Panc1 (cell line): ENCODE measurements at regions of chr1 and their contacts with region 1.

Region 1: DNA sequence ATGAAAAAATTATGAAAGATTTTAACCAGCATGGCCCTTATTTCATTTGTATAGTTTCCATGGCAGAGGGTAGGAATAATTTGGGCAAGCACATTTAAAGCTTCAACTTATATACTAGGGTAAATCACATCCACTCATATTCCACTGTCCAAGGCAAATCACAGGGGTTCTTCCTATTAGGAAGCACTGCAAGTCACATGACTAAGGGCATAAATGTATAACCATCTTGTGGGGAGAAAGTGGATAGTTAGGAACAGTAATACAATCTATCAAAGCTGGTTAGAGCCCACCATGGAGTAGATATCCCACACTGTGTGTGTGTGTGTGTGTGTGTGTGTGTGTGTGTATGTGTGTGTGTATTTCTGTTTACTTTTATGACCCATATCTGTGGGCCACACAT is 7.7 kb upstream of the CHD1L start:
- DNase-seq: no peak
- ATAC-seq: no peak
- H3K4me3 ChIP-seq: no peak overlapping the region
- H3K27ac ChIP-seq: no peak overlapping the region
- H3K4me1 ChIP-seq: no peaks in the 10 kb centered on the region
- H3K27me3 ChIP-seq: no peaks in the 10 kb centered on the region
- CTCF ChIP-seq: no peak

Region 2: GRCh38 chr1:147156638-147157037 is 78.1 kb before region 1 on chr1:
- CTCF ChIA-PET with region 1: interaction called, 10 read pairs
- POLR2A ChIA-PET with region 1: no interaction called
- in situ Hi-C with region 1: no loop called
- intact Hi-C with region 1: no loop called
- DNase-seq: no peak
- ATAC-seq: no peak
- H3K4me3 ChIP-seq: no peak overlapping the region
- H3K27ac ChIP-seq: no peak overlapping the region
- H3K4me1 ChIP-seq: no peaks in the 10 kb centered on the region
- H3K27me3 ChIP-seq: no peaks in the 10 kb centered on the region
- CTCF ChIP-seq: no peak

Region 3: DNA sequence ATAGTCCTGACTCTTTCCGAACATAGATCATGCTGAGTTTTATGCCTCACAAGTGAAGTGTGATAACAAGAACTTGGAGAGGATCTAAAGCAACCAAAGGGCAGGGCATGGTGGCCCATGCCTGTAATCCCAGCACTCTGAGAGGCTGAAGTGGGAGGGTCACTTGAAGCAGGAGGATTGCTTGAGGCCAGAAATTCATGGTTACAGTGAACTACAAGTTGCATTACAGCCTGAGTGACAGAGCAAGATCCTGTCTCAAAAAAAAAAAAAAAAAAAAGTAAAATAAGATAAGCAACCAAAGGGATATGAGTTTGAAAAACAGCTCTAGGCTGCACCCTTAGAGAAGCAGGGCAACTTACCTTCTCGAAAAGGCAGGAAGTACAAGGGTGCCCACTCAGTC is 288.0 kb after region 1 on chr1:
- CTCF ChIA-PET with region 1: no interaction called
- POLR2A ChIA-PET with region 1: no interaction called
- in situ Hi-C with region 1: no loop called
- intact Hi-C with region 1: no loop called
- DNase-seq: no peak
- ATAC-seq: no peak
- H3K4me3 ChIP-seq: no peak overlapping the region
- H3K27ac ChIP-seq: no peak overlapping the region
- H3K4me1 ChIP-seq: no peaks in the 10 kb centered on the region
- H3K27me3 ChIP-seq: peaks cover 15% of the 10 kb centered on the region
- CTCF ChIP-seq: no peak

Region 4: GRCh38 chr1:147611021-147611426 is 376.2 kb after region 1 on chr1:
- CTCF ChIA-PET with region 1: no interaction called
- POLR2A ChIA-PET with region 1: no interaction called
- in situ Hi-C with region 1: no loop called
- intact Hi-C with region 1: no loop called
- DNase-seq: no peak
- ATAC-seq: no peak
- H3K4me3 ChIP-seq: no peak overlapping the region
- H3K27ac ChIP-seq: no peak overlapping the region
- H3K4me1 ChIP-seq: no peaks in the 10 kb centered on the region
- H3K27me3 ChIP-seq: no peaks in the 10 kb centered on the region
- CTCF ChIP-seq: no peak